ENCODE measurements at regions of chr3 and their contacts with region 1.

Region 1: DNA sequence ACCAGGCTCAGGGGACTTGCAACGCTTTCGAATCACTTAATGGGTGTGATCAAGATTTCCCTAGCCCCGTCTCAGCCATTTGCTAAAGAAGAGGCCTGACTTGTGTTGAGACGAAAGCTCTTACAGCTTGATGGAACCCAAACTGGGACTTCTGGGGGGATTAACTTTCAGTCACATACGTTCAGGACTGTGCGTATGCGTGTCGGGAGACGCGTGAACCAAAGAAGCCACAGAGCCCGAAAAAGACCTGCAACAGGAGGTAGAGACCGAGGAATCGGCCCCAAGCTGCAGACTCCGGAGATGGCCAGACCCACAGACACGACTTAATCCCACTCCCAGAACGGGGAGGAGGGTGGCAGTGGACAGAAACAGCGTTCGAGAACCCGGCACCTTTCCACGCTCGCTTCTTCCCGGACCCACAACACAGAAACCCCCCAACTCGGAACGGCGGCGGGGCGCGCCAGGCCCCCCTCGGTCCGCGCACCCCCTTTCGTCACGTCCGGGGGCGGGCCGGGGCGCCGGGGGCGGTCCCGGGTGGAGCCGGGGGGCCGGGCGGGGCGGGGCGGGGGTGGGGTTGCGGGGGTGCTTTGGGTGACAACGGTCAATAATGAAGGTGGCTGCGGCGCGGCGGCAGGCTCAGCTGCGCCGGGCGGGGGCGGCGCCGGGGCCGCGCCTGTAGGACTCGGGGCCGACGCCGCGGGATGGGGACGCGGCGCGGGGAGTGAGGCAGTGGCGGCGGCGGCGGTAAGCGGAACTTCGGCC is at the start of gene ATP11B:
- DNase-seq: peak; percentile 51 to 96 (median 72)

Region 2: GRCh38 chr3:182837855-182838454 is 44.9 kb after region 1 on chr3:
- intact Hi-C with region 1: no loop called
- DNase-seq: no peak

Region 3: DNA sequence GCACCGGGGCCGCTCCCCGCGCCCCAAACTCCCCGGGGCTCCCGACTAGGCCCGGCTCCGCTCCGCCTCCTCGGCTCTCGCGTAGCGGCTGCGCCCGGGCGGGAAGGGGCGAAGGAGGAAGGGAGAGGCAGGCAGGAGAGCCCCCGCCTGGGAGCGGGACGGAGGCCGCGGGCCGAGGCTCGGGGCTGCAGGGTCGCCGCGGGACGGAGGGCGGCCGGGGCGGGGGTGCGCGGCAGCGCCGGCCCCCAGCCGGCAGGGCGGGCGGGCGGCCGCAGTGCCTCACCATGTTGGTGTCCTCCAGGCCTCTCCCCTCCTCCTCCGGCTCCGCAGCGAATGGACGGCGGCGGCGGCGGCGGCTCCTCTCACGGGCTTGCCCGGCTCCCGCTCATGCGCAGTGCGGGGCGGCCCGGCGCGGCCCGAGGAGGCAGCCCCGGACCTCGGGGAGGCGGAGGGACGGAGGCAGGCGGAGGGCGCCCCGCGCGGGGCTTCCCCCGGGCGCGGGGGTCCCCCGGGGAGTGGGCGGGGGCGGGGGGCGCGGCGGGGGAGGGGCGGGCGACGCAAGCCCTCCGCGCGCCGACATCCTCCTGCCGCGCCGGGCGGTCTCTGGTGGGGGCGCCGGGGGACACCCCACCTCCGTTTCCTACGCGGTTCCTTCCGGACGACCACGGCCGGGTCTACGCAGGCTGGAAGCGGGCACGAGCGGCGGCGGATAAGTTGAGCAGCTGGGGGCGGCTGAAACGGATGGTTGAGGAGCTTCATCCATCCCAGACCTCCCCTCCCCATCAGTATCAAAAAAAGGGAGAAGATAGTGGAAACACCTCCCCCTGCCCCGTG is 187.3 kb after region 1 on chr3 and contains the start of gene DCUN1D1:
- intact Hi-C with region 1: loop called (anchors 2 kb)
- DNase-seq: peak; percentile 81 to 98 (median 90)

Measured in posterior cingulate gyrus (tissue), 11 donors.